GM23248 (cell line): ENCODE measurements at regions of chr15 and their contacts with region 1.

Region 1: GRCh38 chr15:59492389-59493377 is 54.7 kb downstream of the FAM81A start:
- DNase-seq: peak; percentile 84
- H3K4me3 ChIP-seq: peak overlapping the region; percentile 20; the same call in 1 of the 2 replicates
- H3K27ac ChIP-seq: no peak overlapping the region
- H3K4me1 ChIP-seq: no peaks in the 10 kb centered on the region
- H3K27me3 ChIP-seq: no peaks in the 10 kb centered on the region

Region 2: GRCh38 chr15:58977887-58978286 is 514.8 kb before region 1 on chr15:
- in situ Hi-C with region 1: loop called (anchors 10 kb)
- DNase-seq: no peak
- H3K4me3 ChIP-seq: no peak overlapping the region
- H3K27ac ChIP-seq: no peak overlapping the region
- H3K4me1 ChIP-seq: no peaks in the 10 kb centered on the region
- H3K27me3 ChIP-seq: no peaks in the 10 kb centered on the region

Region 3: GRCh38 chr15:59160880-59161593 is 331.6 kb before region 1 on chr15:
- in situ Hi-C with region 1: loop called (anchors 10 kb)
- DNase-seq: peak; percentile 26
- H3K4me3 ChIP-seq: no peak overlapping the region
- H3K27ac ChIP-seq: no peak overlapping the region
- H3K4me1 ChIP-seq: peaks cover 8% of the 10 kb centered on the region
- H3K27me3 ChIP-seq: no peaks in the 10 kb centered on the region

Region 4: DNA sequence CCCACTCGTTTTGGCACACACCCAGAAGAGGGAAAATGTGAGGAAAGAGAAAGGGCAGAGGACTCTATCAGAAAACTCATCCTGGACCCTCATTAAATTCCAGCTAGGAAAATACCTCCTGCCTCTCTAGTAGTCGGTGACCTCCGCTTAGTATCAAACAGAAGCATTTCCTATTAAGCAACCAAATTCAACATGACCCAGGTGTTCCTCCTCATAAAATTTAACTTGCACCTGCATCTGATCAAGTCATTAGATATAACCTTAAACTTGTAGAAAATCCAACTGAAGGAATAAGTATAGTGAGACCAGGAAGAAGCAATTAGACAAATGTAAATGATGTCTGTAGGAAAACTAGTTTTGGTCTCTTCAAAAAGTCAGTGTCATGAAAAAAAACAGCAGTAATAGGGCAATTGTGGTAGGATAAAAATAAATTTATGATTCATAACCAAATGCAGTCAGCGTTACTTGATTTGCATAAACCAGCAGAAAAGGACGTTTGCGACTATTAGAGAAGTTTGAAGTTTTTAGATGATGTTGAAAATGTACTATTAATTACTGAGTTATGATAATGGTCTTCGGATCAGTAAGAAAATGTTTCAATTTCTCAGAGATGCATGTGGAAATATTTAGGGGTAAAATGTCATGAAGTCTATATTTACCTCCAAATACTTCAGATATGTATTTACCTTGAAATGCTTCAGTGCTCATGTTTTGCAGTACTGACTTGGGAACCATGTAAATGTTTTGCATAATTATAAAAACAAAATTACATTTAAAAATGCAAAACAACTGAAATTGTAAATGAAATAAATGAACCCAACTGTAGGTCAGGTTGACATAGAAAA is 241.5 kb before region 1 on chr15:
- in situ Hi-C with region 1: loop called (anchors 10 kb)
- DNase-seq: no peak
- H3K4me3 ChIP-seq: no peak overlapping the region
- H3K27ac ChIP-seq: no peak overlapping the region
- H3K4me1 ChIP-seq: no peaks in the 10 kb centered on the region
- H3K27me3 ChIP-seq: no peaks in the 10 kb centered on the region